ENCODE measurements at regions of chr2 and their contacts with region 1.

Region 1: GRCh38 chr2:95022309-95023221 is 2.9 kb upstream of the MAL start:
- DNase-seq: peak; percentile 88
- ATAC-seq: peak; percentile 66
- H3K4me3 Mint-ChIP-seq: no peak overlapping the region
- H3K27ac Mint-ChIP-seq: peak overlapping the region; percentile 71
- H3K4me1 Mint-ChIP-seq: peaks cover 42% of the 10 kb centered on the region
- H3K27me3 Mint-ChIP-seq: peaks cover 31% of the 10 kb centered on the region

Region 2: DNA sequence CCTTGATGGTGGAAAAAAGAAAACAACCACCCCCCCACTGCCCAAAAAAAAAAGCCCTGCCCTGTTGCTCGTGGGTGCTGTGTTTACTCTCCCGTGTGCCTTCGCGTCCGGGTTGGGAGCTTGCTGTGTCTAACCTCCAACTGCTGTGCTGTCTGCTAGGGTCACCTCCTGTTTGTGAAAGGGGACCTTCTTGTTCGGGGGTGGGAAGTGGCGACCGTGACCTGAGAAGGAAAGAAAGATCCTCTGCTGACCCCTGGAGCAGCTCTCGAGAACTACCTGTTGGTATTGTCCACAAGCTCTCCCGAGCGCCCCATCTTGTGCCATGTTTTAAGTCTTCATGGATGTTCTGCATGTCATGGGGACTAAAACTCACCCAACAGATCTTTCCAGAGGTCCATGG is 31.0 kb after region 1 on chr2:
- CTCF ChIA-PET with region 1: interaction called, 44 read pairs
- DNase-seq: no peak
- ATAC-seq: no peak
- H3K4me3 Mint-ChIP-seq: no peak overlapping the region
- H3K27ac Mint-ChIP-seq: no peak overlapping the region
- H3K4me1 Mint-ChIP-seq: peaks cover 48% of the 10 kb centered on the region
- H3K27me3 Mint-ChIP-seq: no peaks in the 10 kb centered on the region

Region 3: GRCh38 chr2:95062242-95063085 is 39.9 kb after region 1 on chr2:
- CTCF ChIA-PET with region 1: interaction called, 38 read pairs
- DNase-seq: peak; percentile 35
- ATAC-seq: peak; percentile 34
- H3K4me3 Mint-ChIP-seq: no peak overlapping the region
- H3K27ac Mint-ChIP-seq: peak overlapping the region; percentile 80
- H3K4me1 Mint-ChIP-seq: peaks cover 29% of the 10 kb centered on the region
- H3K27me3 Mint-ChIP-seq: peaks cover 2% of the 10 kb centered on the region

Region 4: DNA sequence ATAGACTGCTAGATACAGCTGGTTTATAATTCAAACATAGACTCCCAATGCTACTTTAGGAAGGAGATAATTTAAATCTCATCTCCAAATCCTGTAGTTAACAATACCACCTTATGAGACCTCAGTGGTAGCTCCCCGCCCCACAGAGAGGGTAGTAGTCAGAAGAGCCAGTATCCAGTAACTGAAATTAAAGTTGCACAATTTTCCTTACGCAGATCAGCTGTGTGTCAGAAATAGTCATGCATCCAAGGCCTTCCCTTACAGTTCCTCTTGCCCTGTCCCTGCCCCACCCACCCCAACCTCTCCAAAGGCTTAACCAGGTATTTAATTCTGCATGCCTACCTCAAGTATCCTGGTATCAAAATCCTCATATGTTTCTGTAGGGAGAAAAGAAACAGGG is 83.5 kb after region 1 on chr2:
- CTCF ChIA-PET with region 1: interaction called, 11 read pairs
- DNase-seq: no peak
- ATAC-seq: no peak
- H3K4me3 Mint-ChIP-seq: no peak overlapping the region
- H3K27ac Mint-ChIP-seq: no peak overlapping the region
- H3K4me1 Mint-ChIP-seq: no peaks in the 10 kb centered on the region
- H3K27me3 Mint-ChIP-seq: no peaks in the 10 kb centered on the region

Region 5: GRCh38 chr2:95115418-95115817 is 92.9 kb after region 1 on chr2:
- CTCF ChIA-PET with region 1: interaction called, 131 read pairs
- DNase-seq: peak; percentile 85
- ATAC-seq: peak; percentile 99
- H3K4me3 Mint-ChIP-seq: no peak overlapping the region
- H3K27ac Mint-ChIP-seq: peak overlapping the region; percentile 19
- H3K4me1 Mint-ChIP-seq: peaks cover 43% of the 10 kb centered on the region
- H3K27me3 Mint-ChIP-seq: no peaks in the 10 kb centered on the region

Region 6: DNA sequence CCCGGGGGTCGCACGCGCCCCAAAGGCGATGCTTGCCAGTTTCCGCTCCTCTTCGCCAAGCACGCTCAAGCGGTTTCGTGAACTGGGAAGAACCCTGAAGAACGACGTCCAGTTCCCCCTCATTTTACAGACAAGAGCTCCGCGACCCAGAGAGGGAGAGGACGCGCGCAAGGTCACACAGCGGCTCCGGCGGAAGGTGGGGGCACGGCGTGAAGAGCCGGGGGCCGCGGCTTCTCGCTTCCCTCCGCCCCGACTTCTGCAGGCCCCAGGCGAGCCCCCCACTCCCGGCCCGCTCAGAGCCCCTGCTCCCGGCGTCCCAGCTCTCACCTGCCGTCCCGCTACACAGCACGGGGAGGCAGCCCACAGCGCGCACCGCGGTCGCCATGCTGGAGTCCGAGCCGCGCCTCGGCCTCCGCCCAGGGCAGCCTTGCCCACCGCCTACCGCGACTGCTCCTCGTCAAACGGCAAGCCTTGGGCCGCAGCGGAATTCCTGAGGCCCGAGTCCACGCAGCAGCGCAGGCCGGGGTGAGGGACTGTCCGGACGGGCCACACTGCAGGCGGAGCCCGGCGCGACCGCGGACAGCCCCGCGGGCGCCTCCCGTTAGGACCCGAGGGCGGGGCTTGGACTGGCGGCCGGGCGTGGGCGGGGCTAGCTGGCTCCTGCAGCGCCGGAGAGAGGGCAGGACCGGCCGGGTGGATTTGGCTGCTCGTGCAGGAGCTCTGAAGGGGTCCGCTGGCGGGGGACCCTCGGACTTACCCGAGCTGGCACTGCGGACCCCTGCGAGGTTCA is 99.0 kb after region 1 on chr2 and contains the start of gene MRPS5:
- CTCF ChIA-PET with region 1: interaction called, 131 read pairs
- DNase-seq: peak; percentile 88
- ATAC-seq: peak; percentile 97
- H3K4me3 Mint-ChIP-seq: peak within 1 kb of the TSS; percentile 97
- H3K27ac Mint-ChIP-seq: peak within 1 kb of the TSS; percentile 89
- H3K4me1 Mint-ChIP-seq: peaks cover 38% of the 10 kb centered on the region
- H3K27me3 Mint-ChIP-seq: no peaks in the 10 kb centered on the region
- total RNA-seq, gene MRPS5: 80.0 to 82.7 TPM

Measured in activated CD8-positive, alpha-beta memory T cell treated with anti-CD3 and anti-CD28 coated beads, Interleukin-2, amount 10 ng/mL, durations not matched to agents 7 days and 5 days (primary cell).